ENCODE measurements at regions of chr12 and their contacts with region 1.

Region 1: GRCh38 chr12:12786716-12787601 is 1.5 kb downstream of the APOLD1 start:
- DNase-seq: peak; percentile 75
- H3K4me3 Mint-ChIP-seq: peak overlapping the region; percentile 81
- H3K27ac Mint-ChIP-seq: peak overlapping the region; percentile 75
- H3K4me1 Mint-ChIP-seq: peaks cover 5% of the 10 kb centered on the region
- H3K27me3 Mint-ChIP-seq: no peaks in the 10 kb centered on the region
- CTCF ChIP-seq: peak; percentile 17

Region 2: DNA sequence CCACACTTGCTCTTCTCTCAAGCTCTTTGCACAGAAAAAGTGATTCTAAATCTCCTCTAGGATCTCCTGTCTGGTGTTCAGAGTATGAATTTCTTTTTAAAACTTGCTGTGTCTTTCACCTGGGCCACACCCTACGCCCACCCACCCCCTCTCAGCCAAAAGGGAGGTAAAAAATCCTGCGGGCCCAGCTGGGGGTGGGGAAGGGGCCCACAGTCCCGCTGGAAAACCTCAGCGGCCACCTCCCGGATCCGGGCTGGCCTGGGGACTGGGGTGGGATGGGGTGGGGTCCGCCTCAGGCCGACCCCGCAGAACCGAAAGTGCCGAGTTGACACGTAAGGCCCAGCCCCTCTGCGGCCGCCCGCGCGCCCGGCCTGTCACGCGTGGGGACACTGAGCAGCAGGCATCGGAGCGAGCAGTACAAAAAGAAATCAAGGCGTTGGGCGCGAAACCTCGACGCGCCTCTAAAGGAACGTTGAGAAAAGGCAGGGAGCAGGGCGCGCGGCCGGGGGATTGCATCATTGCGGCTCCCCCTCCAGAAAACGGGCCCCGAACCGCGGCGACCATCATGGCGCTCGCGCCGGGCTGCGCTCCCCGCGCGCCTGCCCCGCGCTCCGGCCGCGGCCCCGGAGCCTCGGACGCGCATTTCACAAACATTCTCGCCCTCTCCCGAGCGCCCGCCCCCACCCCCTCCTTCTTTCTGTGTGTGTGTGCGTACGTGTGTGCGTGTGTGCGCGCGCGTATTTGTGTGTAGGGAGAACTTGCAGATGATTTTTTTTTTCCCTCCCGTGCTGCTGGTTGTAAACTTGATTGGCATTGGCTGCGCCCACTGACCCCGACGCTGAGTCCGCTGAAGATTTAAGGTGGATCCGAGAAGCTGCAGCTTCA is 62.1 kb before region 1 on chr12:
- CTCF ChIA-PET with region 1: no interaction called
- POLR2A ChIA-PET with region 1: interaction called, 7 read pairs
- intact Hi-C with region 1: loop called (anchors 5 kb)
- DNase-seq: peak; percentile 97
- H3K4me3 Mint-ChIP-seq: peak overlapping the region; percentile 98
- H3K27ac Mint-ChIP-seq: peak overlapping the region; percentile 99
- H3K4me1 Mint-ChIP-seq: peaks cover 18% of the 10 kb centered on the region
- H3K27me3 Mint-ChIP-seq: no peaks in the 10 kb centered on the region
- CTCF ChIP-seq: no peak

Region 3: GRCh38 chr12:12803186-12803585 is 16.2 kb after region 1 on chr12:
- CTCF ChIA-PET with region 1: interaction called, 62 read pairs
- POLR2A ChIA-PET with region 1: interaction called, 41 read pairs
- intact Hi-C with region 1: loop called (anchors 1 kb)
- DNase-seq: peak; percentile 99
- H3K4me3 Mint-ChIP-seq: peak overlapping the region; percentile 11
- H3K27ac Mint-ChIP-seq: peak overlapping the region; percentile 67
- H3K4me1 Mint-ChIP-seq: peaks cover 48% of the 10 kb centered on the region
- H3K27me3 Mint-ChIP-seq: no peaks in the 10 kb centered on the region
- CTCF ChIP-seq: no peak

Region 4: DNA sequence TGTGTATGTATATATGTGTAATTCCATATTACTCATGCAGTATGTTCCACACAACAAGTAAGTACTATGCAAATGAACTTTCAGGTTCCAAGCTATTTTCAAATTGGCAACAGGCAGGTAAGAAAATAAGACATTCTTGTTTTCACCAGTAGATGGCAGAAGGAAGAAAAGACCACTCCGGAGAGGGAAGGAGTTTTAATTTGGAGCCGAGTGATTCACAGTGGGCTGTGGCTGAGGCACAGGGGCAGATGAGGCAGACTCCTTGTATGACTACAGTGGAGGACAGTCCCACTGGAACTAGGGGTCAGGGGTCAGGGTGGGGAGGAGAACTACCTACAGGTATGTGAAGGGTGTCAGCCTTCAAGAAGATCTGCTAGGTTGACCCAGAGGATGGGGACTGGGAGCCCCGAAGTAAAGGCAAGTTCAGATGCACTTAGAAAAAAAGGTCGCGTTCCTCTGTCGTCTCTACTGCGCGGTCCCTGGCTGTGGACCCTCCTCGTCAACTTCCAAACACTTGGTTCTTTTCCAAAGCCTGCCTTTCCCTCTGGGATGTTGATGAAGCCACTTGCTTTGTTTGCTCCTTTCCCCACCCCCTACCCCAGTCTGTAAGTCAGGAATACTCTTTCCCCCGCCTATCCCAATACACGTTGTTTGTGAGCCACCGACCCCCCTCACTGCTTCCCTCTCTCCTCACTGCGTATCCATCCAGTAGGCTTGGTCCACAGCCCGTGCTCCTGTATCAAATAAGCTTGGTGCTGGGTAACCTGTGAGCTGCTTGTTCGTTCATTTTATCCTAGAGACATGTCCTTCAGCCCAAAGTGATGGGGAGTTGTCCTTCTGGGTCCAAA is 50.3 kb after region 1 on chr12:
- CTCF ChIA-PET with region 1: interaction called, 19 read pairs
- POLR2A ChIA-PET with region 1: interaction called, 5 read pairs
- intact Hi-C with region 1: no loop called
- DNase-seq: peak; percentile 83
- H3K4me3 Mint-ChIP-seq: no peak overlapping the region
- H3K27ac Mint-ChIP-seq: peak overlapping the region; percentile 30
- H3K4me1 Mint-ChIP-seq: peaks cover 56% of the 10 kb centered on the region
- H3K27me3 Mint-ChIP-seq: no peaks in the 10 kb centered on the region
- CTCF ChIP-seq: peak; percentile 62

Region 5: GRCh38 chr12:12975322-12976077 is 188.5 kb after region 1 on chr12:
- CTCF ChIA-PET with region 1: interaction called, 22 read pairs
- POLR2A ChIA-PET with region 1: interaction called, 6 read pairs
- intact Hi-C with region 1: no loop called
- DNase-seq: peak; percentile 55
- H3K4me3 Mint-ChIP-seq: no peak overlapping the region
- H3K27ac Mint-ChIP-seq: peak overlapping the region; percentile 85
- H3K4me1 Mint-ChIP-seq: peaks cover 12% of the 10 kb centered on the region
- H3K27me3 Mint-ChIP-seq: no peaks in the 10 kb centered on the region
- CTCF ChIP-seq: peak; percentile 23

Region 6: DNA sequence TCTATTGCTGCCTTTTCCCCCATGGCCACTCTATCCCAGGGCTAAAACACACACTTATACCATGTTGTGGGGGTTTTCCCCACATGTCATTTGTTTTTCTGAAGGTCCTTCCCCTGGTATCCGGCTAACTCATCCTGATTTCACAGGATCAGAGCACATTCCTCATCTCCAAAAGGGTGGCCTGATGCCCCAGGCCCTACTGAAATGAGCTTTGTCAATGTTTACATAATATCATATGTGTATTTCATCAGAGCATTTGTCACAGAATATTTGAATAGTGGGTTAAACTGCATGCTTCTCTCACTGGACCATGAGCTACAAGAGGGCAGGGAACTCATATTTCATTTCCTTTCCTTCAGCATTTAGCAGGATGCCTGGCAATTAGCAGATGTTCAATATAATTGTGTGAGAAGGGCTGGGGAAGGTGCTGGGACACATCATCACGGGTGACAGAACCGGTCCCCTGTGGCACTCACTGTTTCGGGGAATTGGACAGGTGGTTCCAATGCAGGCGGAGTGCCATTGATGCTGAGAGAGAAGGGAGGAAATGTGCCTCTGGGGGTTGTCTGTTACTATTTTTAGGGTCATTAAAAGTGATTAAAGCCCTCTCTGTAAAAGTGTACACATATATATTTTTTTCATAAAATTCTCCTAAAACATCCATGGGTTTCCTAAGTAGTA is 436.4 kb after region 1 on chr12:
- CTCF ChIA-PET with region 1: no interaction called
- POLR2A ChIA-PET with region 1: interaction called, 7 read pairs
- intact Hi-C with region 1: loop called (anchors 5 kb)
- DNase-seq: peak; percentile 92
- H3K4me3 Mint-ChIP-seq: peak overlapping the region; percentile 15
- H3K27ac Mint-ChIP-seq: peak overlapping the region; percentile 80
- H3K4me1 Mint-ChIP-seq: peaks cover 43% of the 10 kb centered on the region
- H3K27me3 Mint-ChIP-seq: no peaks in the 10 kb centered on the region
- CTCF ChIP-seq: no peak